ENCODE measurements at regions of chr17 and their contacts with region 1.

Region 1: GRCh38 chr17:75319904-75320691 is 30.9 kb upstream of the SLC25A19 start:
- DNase-seq: no peak
- H3K4me3 ChIP-seq: no peak overlapping the region
- H3K27me3 ChIP-seq: no peaks in the 10 kb centered on the region
- CTCF ChIP-seq: no peak

Region 2: DNA sequence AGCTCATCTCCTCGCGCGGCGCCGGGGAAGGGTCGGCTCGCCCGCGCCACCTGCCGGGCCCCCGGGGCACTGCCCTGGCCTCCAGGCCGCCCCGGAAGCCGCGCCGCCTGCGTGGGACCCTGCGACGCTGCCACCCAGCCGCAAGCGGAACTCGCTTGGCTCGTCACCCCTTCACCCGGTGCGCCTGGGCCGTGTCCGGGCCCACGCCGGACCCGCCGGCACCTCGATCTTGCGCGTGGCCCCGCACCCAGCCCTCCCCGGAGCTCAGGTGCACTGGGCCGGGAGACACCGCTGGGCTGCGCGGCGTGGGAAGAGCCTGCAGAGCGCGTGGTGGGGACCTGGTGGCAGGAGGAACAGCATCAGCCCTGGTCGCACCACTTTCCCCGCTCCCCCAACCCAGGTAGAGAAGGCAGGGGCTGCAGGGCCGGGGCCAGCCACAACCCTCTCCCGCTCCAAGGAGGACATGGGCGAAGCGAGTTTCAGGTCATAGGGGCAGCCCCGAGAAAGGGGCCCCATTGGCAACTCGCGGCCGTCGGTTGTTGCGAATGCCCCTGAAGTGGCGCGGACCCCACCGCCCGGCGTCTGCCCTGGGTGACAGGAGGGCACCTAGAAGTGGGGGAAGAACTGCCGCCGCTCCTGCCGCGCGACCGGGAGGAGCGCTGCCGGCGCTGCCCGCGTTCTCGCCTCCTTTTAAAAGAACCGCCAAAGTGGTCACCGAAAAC is 48.7 kb before region 1 on chr17:
- CTCF ChIA-PET with region 1: interaction called, 14 read pairs
- POLR2A ChIA-PET with region 1: no interaction called
- DNase-seq: no peak
- H3K4me3 ChIP-seq: peak overlapping the region; percentile 71
- H3K27me3 ChIP-seq: no peaks in the 10 kb centered on the region
- CTCF ChIP-seq: peak; percentile 7

Region 3: GRCh38 chr17:75393523-75394331 is 73.6 kb after region 1 on chr17:
- CTCF ChIA-PET with region 1: interaction called, 22 read pairs
- POLR2A ChIA-PET with region 1: interaction called, 4 read pairs
- DNase-seq: peak; percentile 91
- H3K4me3 ChIP-seq: peak overlapping the region; percentile 54
- H3K27me3 ChIP-seq: no peaks in the 10 kb centered on the region
- CTCF ChIP-seq: 0 out of 2 replicates have a peak, but pooled peaks have one; percentile 9

Region 4: DNA sequence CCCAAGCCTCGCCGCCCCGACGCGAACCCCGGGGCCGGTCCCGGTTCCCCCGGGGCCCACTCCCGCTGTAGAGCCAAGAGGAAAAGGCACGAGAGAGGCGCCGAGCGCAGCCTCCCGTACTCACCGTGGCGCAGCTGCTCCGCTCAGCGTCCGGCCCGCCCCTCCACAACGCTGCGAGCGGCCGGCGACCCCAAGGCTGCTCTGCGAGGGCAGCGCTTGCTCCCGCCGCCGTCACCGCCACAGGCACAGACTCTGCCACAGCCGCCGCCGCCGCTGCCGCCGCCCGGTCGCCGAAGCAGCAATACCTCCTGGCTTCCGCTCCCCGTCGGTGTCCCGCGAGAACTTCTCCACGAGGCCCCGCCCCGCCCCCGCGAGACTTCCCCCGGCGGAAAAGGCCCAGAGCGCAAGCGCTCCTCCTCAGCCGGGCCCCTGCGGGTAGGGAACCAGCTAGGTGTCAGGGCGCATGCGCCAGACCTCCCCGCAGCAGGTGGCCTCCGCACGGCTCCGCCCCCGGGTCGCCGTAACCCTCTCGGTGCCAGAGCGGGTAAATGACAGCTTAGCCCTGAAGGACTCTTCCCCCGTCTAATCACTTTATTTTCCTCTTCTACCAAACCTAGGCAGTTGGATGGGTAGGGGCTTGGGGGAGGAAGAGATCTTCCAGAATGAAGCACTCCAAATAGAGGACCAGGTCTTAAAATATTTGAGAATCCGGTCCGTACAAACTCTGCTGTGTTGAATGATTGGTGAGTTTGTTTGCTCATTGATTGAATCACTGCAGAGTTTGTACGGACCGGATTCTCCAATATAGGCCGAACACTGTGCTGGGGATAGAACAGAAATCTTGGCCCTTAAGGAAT is 85.5 kb after region 1 on chr17 and contains the start of gene GRB2:
- CTCF ChIA-PET with region 1: interaction called, 27 read pairs
- POLR2A ChIA-PET with region 1: no interaction called
- DNase-seq: peak; percentile 58
- H3K4me3 ChIP-seq: peak within 1 kb of the TSS; percentile 93
- H3K27me3 ChIP-seq: peaks cover 5% of the 10 kb centered on the region; the same call in 1 of the 2 replicates
- CTCF ChIP-seq: no peak
- polyA plus RNA-seq, gene GRB2: 46.5 and 50.7 TPM in 2 replicates

Region 5: DNA sequence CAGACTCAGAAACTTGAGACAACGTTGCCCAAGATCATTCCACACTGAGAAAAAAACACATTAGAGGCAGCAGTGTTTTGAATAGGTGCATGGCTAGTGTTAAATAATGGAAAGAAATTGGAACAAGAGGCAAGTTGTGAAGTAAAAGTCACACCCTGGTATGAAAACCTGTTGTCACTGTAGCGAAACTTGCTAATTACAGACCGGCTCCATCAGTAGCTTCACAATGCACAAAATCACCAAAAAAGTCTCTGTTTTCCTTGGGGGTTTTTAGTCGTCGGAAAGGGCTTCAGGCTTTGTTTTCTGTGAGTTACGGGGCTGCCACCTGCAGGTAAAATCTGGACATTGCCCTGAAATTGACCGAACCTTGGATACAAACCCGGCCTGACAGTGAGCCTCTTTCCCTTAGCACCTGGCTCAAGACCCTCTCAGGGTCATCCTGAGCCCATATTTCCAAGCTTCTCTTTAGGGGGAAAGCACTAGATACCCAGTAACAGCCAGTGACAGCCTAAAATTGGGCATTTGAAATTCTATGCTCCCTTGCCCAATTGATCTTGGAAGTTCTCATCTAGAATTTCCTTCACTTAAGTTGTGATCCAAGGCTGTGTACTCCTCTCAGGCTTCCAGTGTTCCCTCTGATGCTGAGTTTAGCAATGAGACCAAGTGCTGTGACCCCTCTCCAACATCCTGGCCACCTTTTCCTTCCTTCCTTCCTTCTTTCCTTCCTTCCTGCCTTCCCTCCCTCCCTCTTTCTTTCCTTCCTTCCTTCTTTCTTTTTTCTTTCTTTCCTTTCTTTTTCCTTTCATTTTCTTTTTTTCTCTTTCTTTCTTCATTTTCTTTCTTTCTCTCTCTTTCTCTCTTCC is 92.6 kb after region 1 on chr17:
- CTCF ChIA-PET with region 1: interaction called, 28 read pairs
- POLR2A ChIA-PET with region 1: no interaction called
- DNase-seq: no peak
- H3K4me3 ChIP-seq: no peak overlapping the region
- H3K27me3 ChIP-seq: peaks cover 6% of the 10 kb centered on the region
- CTCF ChIP-seq: peak; percentile 77